Activated CD4-positive, alpha-beta T cell treated with anti-CD3 and anti-CD28 coated beads for 36 hours (primary cell): ENCODE measurements at regions of chr12 and their contacts with region 1.

Region 1: DNA sequence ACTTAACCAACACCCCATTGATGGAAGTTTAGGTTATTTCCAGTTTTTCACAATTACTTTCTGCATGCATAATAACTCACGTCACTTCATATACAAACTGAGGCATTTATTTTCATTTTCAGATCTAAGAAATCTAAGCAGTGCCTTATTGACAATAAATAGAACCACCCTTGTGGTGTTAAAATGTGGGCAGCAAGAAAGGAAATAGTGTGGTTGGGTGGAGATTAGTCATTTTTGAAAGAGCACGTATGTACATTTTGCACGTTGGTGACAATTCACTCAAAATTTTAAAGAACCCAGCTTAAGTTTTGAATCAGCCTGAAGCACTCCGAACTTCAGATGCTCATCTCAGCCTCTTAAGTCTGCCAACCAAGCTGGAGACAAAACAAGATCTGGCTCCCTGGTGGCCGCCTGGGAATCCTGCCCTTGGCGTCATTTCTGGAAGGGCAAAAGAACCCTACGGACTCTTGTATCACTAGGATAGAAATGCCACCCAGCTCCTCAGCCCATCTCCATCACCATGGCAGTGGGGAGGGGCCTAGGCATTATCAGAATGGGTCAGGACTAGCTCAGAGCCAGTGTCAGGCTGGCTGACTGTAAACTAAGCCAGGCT is 89.5 kb upstream of the BCL2L14 start:
- DNase-seq: peak; percentile 70
- ATAC-seq: peak; percentile 87
- H3K4me3 Mint-ChIP-seq: peak overlapping the region; percentile 26
- H3K27ac Mint-ChIP-seq: peak overlapping the region; percentile 99
- H3K4me1 Mint-ChIP-seq: peaks cover 58% of the 10 kb centered on the region
- H3K27me3 Mint-ChIP-seq: no peaks in the 10 kb centered on the region

Region 2: GRCh38 chr12:11730299-11731041 is 250.8 kb before region 1 on chr12:
- CTCF ChIA-PET with region 1: no interaction called
- POLR2A ChIA-PET with region 1: interaction called, 4 read pairs
- intact Hi-C with region 1: loop called in 1 of 2 experiments (anchors 1 kb)
- DNase-seq: peak; percentile 39
- ATAC-seq: no peak
- H3K4me3 Mint-ChIP-seq: peak overlapping the region; percentile 21
- H3K27ac Mint-ChIP-seq: peak overlapping the region; percentile 88
- H3K4me1 Mint-ChIP-seq: peaks cover 86% of the 10 kb centered on the region
- H3K27me3 Mint-ChIP-seq: no peaks in the 10 kb centered on the region

Region 3: GRCh38 chr12:11765817-11766794 is 215.1 kb before region 1 on chr12:
- CTCF ChIA-PET with region 1: interaction called, 4 read pairs
- POLR2A ChIA-PET with region 1: interaction called, 4 read pairs
- intact Hi-C with region 1: loop called in 1 of 2 experiments (anchors 2 kb)
- DNase-seq: peak; percentile 90
- ATAC-seq: peak; percentile 89
- H3K4me3 Mint-ChIP-seq: peak overlapping the region; percentile 32
- H3K27ac Mint-ChIP-seq: peak overlapping the region; percentile 84
- H3K4me1 Mint-ChIP-seq: peaks cover 100% of the 10 kb centered on the region
- H3K27me3 Mint-ChIP-seq: no peaks in the 10 kb centered on the region

Region 4: GRCh38 chr12:11771356-11771755 is 209.9 kb before region 1 on chr12:
- CTCF ChIA-PET with region 1: interaction called, 4 read pairs
- POLR2A ChIA-PET with region 1: interaction called, 3 read pairs
- intact Hi-C with region 1: loop called (anchors 1 to 2 kb)
- DNase-seq: peak; percentile 48
- ATAC-seq: peak; percentile 45
- H3K4me3 Mint-ChIP-seq: no peak overlapping the region
- H3K27ac Mint-ChIP-seq: peak overlapping the region; percentile 79
- H3K4me1 Mint-ChIP-seq: peaks cover 94% of the 10 kb centered on the region
- H3K27me3 Mint-ChIP-seq: no peaks in the 10 kb centered on the region

Region 5: GRCh38 chr12:11901701-11902524 is 79.3 kb before region 1 on chr12:
- CTCF ChIA-PET with region 1: interaction called, 6 read pairs
- POLR2A ChIA-PET with region 1: interaction called, 3 read pairs
- intact Hi-C with region 1: loop called (anchors 1 to 2 kb)
- DNase-seq: peak; percentile 75
- ATAC-seq: peak; percentile 78
- H3K4me3 Mint-ChIP-seq: peak overlapping the region; percentile 39
- H3K27ac Mint-ChIP-seq: peak overlapping the region; percentile 88
- H3K4me1 Mint-ChIP-seq: peaks cover 44% of the 10 kb centered on the region
- H3K27me3 Mint-ChIP-seq: peaks cover 2% of the 10 kb centered on the region

Region 6: DNA sequence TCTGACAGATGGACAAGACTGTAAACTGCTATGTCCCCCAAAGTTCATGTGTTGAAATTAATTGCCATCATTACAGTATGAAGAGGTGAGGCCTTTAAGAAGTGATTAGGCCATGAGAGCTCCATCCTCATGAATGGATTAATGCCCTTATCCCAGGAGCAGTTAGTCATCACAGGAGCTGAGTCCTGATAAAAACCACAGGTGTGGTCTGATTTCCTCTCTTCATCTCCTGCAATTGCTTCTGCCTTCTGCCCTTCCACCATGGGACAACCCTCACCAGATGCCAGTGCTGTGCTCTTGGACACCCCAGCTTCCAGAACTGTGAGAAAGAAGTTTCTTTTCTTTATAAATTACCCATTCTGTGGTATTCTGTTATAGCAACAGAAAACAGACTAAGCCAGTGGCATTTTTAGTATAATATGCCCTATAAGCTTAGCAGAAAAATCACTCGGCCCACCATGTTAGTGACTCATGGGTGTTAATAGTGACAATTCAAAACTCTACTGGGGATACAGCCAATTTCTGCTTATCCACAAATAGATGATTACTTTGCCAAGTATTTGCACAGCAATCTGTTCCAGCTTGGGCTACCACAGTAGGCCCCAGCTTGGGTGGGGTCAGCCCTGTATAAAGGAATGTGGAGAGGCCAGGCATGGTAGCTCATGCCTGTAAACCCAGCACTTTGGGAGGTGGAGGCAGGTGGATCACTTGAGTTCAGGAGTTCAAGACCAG is 39.5 kb before region 1 on chr12:
- CTCF ChIA-PET with region 1: no interaction called
- POLR2A ChIA-PET with region 1: no interaction called
- intact Hi-C with region 1: no loop called
- DNase-seq: no peak
- ATAC-seq: no peak
- H3K4me3 Mint-ChIP-seq: no peak overlapping the region
- H3K27ac Mint-ChIP-seq: no peak overlapping the region
- H3K4me1 Mint-ChIP-seq: no peaks in the 10 kb centered on the region
- H3K27me3 Mint-ChIP-seq: no peaks in the 10 kb centered on the region

Region 7: GRCh38 chr12:11958221-11959091 is 22.8 kb before region 1 on chr12:
- CTCF ChIA-PET with region 1: interaction called, 5 read pairs
- POLR2A ChIA-PET with region 1: interaction called, 4 read pairs
- intact Hi-C with region 1: loop called (anchors 1 to 2 kb)
- DNase-seq: peak; percentile 78
- ATAC-seq: peak; percentile 97
- H3K4me3 Mint-ChIP-seq: peak overlapping the region; percentile 11
- H3K27ac Mint-ChIP-seq: peak overlapping the region; percentile 86
- H3K4me1 Mint-ChIP-seq: peaks cover 36% of the 10 kb centered on the region
- H3K27me3 Mint-ChIP-seq: peaks cover 11% of the 10 kb centered on the region

Region 8: GRCh38 chr12:11998944-11999315 is 17.7 kb after region 1 on chr12:
- CTCF ChIA-PET with region 1: interaction called, 13 read pairs
- POLR2A ChIA-PET with region 1: interaction called, 4 read pairs
- intact Hi-C with region 1: loop called (anchors 1 to 2 kb)
- DNase-seq: no peak
- ATAC-seq: no peak
- H3K4me3 Mint-ChIP-seq: no peak overlapping the region
- H3K27ac Mint-ChIP-seq: peak overlapping the region; percentile 84
- H3K4me1 Mint-ChIP-seq: peaks cover 31% of the 10 kb centered on the region
- H3K27me3 Mint-ChIP-seq: no peaks in the 10 kb centered on the region